K562 (cell line): ENCODE measurements at regions of chr6 and their contacts with region 1.

Region 1: DNA sequence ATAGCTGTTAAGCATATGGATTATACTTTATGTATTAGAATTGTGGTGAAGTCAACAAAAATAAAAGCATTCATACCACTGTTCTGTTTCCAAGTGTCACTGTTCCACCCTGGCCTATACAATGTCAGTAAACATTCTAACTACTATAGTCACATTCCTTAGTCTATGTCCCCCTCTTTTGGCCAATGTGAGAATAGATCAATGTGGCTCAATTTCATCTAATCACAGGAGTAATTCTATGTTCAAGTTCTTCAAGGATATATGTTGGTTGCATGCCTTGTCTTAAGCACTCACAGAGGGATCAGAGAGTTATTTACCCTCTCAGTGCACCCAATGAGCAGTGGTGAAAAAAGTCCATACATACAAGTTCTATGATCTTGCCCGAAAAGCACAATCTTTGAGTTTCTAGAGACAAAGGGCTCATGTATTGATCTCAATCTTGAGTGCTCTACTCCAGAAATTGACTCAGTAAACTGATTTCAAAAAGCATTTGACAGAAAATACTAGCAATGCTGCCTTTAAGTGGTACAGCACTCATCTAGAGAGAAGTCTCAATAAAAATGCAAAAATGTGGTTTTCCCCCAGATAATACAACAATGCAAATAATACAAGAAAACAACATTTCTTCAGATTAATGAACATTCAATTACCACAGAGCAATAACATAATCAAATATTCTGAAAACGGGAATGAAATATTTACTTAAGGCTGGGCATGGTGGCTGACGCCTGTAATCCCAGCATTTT is 16.5 kb downstream of the SMLR1 start:
- DNase-seq: peak in 2 of 4 experiments; percentile 32 to 38
- ATAC-seq: peak; percentile 85
- H3K4me3 ChIP-seq: no peak overlapping the region
- H3K27ac ChIP-seq: no peak overlapping the region
- H3K4me1 ChIP-seq: no peaks in the 10 kb centered on the region
- H3K27me3 ChIP-seq: no peaks in the 10 kb centered on the region
- CTCF ChIP-seq: peak; percentile 41 to 65 (median 59); a peak in 5 of 6 replicates
- EP300 ChIP-seq: no peak
- POLR2A ChIP-seq: no peak
- RAD21 ChIP-seq: peak; percentile 70 to 77

Region 2: DNA sequence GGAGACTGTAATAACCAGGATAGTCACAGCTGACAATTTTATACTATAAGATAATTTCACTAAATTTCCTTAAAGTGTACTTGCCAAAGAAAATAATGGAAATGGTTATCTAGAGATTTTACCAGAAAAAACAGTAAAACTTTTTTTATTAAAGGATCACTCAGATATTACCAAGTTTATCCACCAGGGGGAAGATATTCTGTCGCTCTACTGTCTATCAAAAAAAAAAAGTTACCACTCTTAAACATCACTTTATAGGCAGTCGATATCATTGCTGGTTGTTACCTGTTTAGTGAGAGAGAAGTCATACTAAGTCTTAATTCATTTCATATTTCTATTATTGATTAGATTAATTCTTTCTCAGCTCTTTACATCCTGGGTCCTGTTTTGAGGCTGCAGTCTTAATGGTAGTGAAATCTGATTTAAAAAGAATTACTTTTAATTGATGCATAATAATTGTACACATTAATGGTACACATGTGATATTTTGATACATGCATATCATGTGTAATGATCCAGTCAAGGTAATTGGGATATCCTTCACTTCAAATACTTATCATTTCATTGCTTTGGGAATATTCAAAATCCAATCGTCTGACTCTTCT is 806.4 kb before region 1 on chr6:
- CTCF ChIA-PET with region 1: no interaction called
- POLR2A ChIA-PET with region 1: no interaction called
- in situ Hi-C with region 1: no loop called
- intact Hi-C with region 1: loop called (anchors 10 kb)
- DNase-seq: peak; percentile 18 to 22 (median 20)
- ATAC-seq: 0 out of 3 replicates have a peak, but pooled peaks have one; percentile 28
- H3K4me3 ChIP-seq: no peak overlapping the region
- H3K27ac ChIP-seq: no peak overlapping the region
- H3K4me1 ChIP-seq: peaks cover 3 to 22% of the 10 kb centered on the region in 2 experiments; a peak in 3 of 5 replicates
- H3K27me3 ChIP-seq: no peaks in the 10 kb centered on the region
- CTCF ChIP-seq: peak in 2 of 3 experiments; percentile 31 to 48; a peak in 3 of 6 replicates
- EP300 ChIP-seq: no peak
- POLR2A ChIP-seq: no peak
- RAD21 ChIP-seq: peak; percentile 11 to 32; a peak in 2 of 4 replicates